HepG2 (cell line): ENCODE measurements at regions of chr18 and their contacts with region 1.

Region 1: DNA sequence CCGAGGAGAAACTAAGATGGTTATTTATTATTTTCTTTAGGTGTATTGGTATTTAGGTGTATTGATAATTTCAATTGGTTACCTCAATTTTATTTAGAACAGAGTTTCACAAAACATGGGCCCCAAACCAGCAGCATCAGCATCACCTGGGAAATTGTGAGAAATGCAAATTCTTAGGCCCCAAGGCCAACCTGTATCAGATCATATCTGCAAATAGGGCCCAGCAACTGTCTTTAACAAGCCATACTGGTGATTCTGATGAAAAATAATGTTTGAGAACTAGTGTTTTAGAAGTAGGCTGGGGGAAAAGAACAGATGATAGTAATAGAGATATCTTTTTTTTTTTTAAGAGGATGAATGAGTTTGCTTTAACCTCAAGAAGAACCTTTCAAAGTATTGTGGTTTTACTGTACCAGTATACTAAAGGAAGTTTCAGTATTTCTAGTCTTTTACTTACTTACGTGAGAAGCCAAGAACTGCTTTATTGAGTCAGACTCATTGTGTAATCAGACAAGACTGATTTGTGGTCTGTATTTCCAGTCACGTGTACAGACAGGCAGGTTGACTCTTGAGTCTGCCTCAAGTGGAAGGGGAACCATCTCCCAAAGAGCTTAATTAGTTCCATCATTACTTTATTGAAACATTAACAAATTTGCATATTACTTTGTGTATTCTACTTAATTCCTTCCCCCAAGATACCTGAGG is 60.4 kb upstream of the GAREM1 start:
- DNase-seq: no peak
- ATAC-seq: no peak
- H3K4me3 ChIP-seq: no peak overlapping the region
- H3K27ac ChIP-seq: no peak overlapping the region
- H3K4me1 ChIP-seq: no peaks in the 10 kb centered on the region
- H3K27me3 ChIP-seq: no peaks in the 10 kb centered on the region; a peak in 1 of 5 replicates
- CTCF ChIP-seq: no peak
- EP300 ChIP-seq: no peak
- POLR2A ChIP-seq: no peak
- RAD21 ChIP-seq: no peak

Region 2: GRCh38 chr18:32483002-32483401 is 48.1 kb before region 1 on chr18:
- CTCF ChIA-PET with region 1: no interaction called
- POLR2A ChIA-PET with region 1: no interaction called
- in situ Hi-C with region 1: no loop called
- intact Hi-C with region 1: loop called (anchors 2 kb)
- DNase-seq: no peak
- ATAC-seq: no peak
- H3K4me3 ChIP-seq: no peak overlapping the region
- H3K27ac ChIP-seq: no peak overlapping the region
- H3K4me1 ChIP-seq: no peaks in the 10 kb centered on the region
- H3K27me3 ChIP-seq: peaks cover 0 to 6% of the 10 kb centered on the region in 2 experiments; a peak in 1 of 5 replicates
- CTCF ChIP-seq: no peak
- EP300 ChIP-seq: no peak
- POLR2A ChIP-seq: no peak
- RAD21 ChIP-seq: no peak